GM12878 (cell line): ENCODE measurements at regions of chr15 and their contacts with region 1.

Region 1: DNA sequence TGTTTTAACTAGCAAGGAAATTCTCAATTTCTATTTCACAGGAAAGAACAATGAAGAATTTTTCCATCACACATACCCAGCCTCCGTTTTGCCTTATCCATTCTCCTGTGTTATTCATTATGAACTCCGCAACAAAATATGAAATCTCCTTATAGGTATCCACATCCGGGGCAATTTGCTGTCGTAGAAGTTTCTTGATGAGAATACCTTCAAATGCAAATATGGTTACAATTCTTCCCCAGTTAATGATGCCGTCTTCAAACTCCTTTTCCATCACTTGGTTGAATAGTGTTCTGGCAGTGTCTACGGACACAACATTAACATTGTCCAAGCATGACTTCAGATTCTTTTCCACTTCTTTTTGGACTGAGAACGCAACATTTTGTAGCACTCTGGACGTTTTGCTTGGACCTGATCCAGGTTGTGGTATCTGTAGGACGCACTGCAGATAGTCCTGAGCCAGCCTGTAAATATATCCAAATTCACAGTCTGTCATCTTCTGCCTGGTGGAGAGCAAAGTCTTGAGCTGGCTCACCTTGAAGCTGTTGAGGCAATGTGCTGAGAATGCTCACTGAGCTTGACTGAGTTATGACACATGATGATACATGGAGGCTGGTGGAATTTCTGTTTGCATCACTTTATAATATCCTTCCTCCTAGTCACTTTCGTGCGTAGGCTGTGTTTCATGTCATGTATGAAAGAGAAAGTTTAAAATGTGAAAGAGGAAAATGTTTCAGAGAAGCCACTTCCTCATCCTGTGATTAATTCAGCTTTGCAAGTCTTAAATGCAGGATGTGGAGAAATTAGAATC is at the start of gene BCL2A1:
- DNase-seq: peak; percentile 96
- ATAC-seq: peak; percentile 72
- H3K4me3 ChIP-seq: peak within 1 kb of the TSS; percentile 88
- H3K27ac ChIP-seq: peak within 1 kb of the TSS; percentile 88
- H3K4me1 ChIP-seq: peaks cover 26% of the 10 kb centered on the region
- H3K27me3 ChIP-seq: no peaks in the 10 kb centered on the region
- CTCF ChIP-seq: no peak
- EP300 ChIP-seq: peak; percentile 93 to 94
- POLR2A ChIP-seq: peak; percentile 95
- RAD21 ChIP-seq: no peak; the same call in 1 of the 2 replicates
- polyA plus RNA-seq, gene BCL2A1: 536 to 570 TPM

Region 2: DNA sequence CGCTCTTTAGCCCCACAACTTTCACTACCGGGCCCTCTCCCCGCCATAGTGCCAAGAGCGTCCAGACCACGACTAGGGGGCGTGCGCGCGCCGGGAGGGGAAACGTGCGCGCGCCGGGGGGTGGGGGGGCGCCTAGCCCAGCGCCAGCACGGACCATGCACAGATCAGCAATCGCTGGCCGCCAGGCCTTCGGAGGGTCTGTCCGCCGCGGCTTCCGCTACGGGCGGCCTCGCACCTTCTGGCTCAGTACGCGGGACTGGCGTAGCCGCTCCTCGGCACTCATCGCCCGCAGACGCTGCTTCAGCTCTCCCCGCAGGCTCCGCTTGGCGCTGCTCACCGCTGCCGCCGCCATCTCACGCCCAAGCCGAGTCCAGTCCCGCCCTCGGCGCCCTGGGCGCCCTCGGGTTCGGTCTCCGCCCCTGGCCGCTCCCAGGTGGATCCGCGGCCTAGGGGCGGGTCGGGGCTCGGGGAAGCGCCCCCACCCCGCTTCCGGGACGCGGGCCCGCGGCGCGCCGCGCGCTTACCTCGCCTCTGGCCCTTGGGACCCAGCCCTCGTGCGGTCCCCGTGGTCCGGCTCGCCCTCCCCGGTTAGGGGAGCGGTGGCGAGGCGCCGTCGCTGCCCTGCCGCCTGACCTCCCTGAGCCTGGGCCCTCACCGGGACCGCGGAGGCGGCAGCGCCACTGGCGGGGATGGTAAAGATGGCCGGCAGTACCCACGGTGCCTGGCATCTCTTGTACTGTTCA is 74.0 kb before region 1 on chr15 and contains the start of gene MTHFS:
- CTCF ChIA-PET with region 1: interaction called, 10 read pairs
- POLR2A ChIA-PET with region 1: interaction called, 14 read pairs
- RAD21 ChIA-PET with region 1: interaction called, 35 read pairs
- SMC1A ChIA-PET with region 1: interaction called, 58 read pairs
- in situ Hi-C with region 1: no loop called
- intact Hi-C with region 1: loop called (anchors 2 kb)
- DNase-seq: no peak
- ATAC-seq: peak; percentile 86
- H3K4me3 ChIP-seq: peak within 1 kb of the TSS; percentile 66
- H3K27ac ChIP-seq: peak within 1 kb of the TSS; percentile 85
- H3K4me1 ChIP-seq: peaks cover 16% of the 10 kb centered on the region
- H3K27me3 ChIP-seq: no peaks in the 10 kb centered on the region
- CTCF ChIP-seq: peak; percentile 44 to 62 (median 54)
- EP300 ChIP-seq: 0 out of 4 replicates have a peak, but pooled peaks of 1 of the 2 experiments have one; percentile 26
- POLR2A ChIP-seq: peak; percentile 94
- RAD21 ChIP-seq: peak; percentile 57
- polyA plus RNA-seq, gene MTHFS: 14.0 to 24.5 TPM

Region 3: GRCh38 chr15:79901958-79902357 is 68.9 kb before region 1 on chr15:
- CTCF ChIA-PET with region 1: interaction called, 10 read pairs
- POLR2A ChIA-PET with region 1: interaction called, 14 read pairs
- RAD21 ChIA-PET with region 1: interaction called, 35 read pairs
- SMC1A ChIA-PET with region 1: interaction called, 58 read pairs
- in situ Hi-C with region 1: no loop called
- intact Hi-C with region 1: loop called (anchors 2 kb)
- DNase-seq: peak; percentile 90
- ATAC-seq: peak; percentile 42
- H3K4me3 ChIP-seq: no peak overlapping the region
- H3K27ac ChIP-seq: peak overlapping the region; percentile 36
- H3K4me1 ChIP-seq: peaks cover 33% of the 10 kb centered on the region
- H3K27me3 ChIP-seq: no peaks in the 10 kb centered on the region
- CTCF ChIP-seq: peak in 1 of 3 experiments; percentile 9; a peak in 1 of 6 replicates
- EP300 ChIP-seq: no peak
- POLR2A ChIP-seq: no peak
- RAD21 ChIP-seq: no peak

Region 4: DNA sequence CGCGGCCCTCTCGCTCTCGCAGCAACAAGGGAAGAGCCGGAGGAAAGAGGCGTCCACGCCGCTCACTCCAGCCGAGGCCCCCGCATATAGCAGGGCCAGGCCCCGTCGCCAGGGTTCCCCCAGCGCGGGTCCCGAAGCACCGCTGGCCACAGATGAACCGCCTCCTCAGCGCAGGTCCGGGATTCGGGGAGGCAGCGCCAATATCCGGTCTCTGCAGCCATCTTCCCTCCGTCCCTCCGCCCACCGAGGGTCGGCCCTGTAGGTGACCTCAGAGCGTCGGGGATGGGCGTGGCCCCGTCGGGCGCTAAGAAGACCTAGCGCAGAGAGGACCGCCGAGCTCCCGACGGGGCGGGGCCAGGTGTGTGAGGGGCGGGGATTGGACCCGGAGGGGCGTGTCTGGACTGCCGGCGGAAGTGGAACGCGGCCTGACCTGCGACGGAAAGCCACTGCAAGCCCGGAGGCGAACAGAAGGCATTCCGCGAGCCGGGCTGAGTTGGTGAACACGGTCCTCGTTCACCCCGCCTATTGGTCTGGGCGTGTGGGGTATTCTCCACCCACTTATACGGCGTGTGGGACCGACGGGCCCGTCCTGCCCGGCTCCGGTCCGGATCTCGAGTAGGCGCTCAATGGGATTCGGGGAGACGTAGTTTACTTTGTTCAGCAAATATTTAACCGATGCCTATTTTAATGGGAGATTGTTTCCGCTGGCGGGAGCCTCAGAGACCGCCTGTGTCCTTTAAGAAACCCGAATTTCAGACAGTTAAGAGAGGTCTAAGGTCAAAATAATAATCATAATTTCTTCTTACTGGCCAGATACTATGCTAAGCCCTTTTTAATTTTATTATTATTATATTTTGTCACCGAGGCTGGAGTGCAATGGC is 47.1 kb before region 1 on chr15:
- CTCF ChIA-PET with region 1: no interaction called
- POLR2A ChIA-PET with region 1: interaction called, 49 read pairs
- RAD21 ChIA-PET with region 1: interaction called, 52 read pairs
- SMC1A ChIA-PET with region 1: interaction called, 54 read pairs
- in situ Hi-C with region 1: no loop called
- intact Hi-C with region 1: loop called (anchors 2 kb)
- DNase-seq: peak; percentile 94
- ATAC-seq: peak; percentile 97
- H3K4me3 ChIP-seq: peak overlapping the region; percentile 80
- H3K27ac ChIP-seq: peak overlapping the region; percentile 92
- H3K4me1 ChIP-seq: no peaks in the 10 kb centered on the region
- H3K27me3 ChIP-seq: no peaks in the 10 kb centered on the region
- CTCF ChIP-seq: no peak
- EP300 ChIP-seq: no peak
- POLR2A ChIP-seq: peak; percentile 94
- RAD21 ChIP-seq: 0 out of 2 replicates have a peak, but pooled peaks have one; percentile 2

Region 5: GRCh38 chr15:79943820-79944219 is 27.0 kb before region 1 on chr15:
- CTCF ChIA-PET with region 1: interaction called, 4 read pairs
- POLR2A ChIA-PET with region 1: interaction called, 18 read pairs
- RAD21 ChIA-PET with region 1: interaction called, 15 read pairs
- SMC1A ChIA-PET with region 1: interaction called, 115 read pairs
- in situ Hi-C with region 1: no loop called
- intact Hi-C with region 1: no loop called
- DNase-seq: no peak
- ATAC-seq: peak; percentile 84
- H3K4me3 ChIP-seq: no peak overlapping the region
- H3K27ac ChIP-seq: no peak overlapping the region
- H3K4me1 ChIP-seq: peaks cover 16% of the 10 kb centered on the region
- H3K27me3 ChIP-seq: no peaks in the 10 kb centered on the region
- CTCF ChIP-seq: no peak
- EP300 ChIP-seq: peak; percentile 72 to 89
- POLR2A ChIP-seq: no peak
- RAD21 ChIP-seq: no peak

Region 6: DNA sequence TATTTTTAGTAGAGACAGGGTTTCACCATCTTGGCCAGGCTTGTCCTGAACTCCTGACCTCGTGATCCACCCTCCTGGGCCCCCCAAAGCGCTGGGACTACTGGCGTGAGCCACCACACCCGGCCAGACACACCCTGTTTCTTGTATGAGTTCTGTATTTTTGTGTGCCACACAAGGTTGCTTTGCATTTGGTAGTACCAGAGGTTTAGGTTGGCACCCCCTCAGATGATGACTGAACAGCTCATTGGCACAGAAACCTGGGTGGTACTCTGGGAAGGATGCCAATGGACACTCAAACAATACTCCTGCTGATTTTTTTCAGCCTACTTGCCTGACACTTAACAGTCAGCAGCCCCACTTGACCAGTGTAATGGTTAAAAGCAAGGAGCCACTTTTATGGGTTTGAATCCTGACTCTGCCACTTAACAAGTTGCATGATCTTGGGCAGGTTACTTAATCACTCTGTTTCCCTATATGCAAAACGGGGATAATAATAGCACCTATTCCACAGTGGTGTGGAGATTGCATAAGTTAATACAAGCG is 39.4 kb after region 1 on chr15:
- CTCF ChIA-PET with region 1: interaction called, 6 read pairs
- POLR2A ChIA-PET with region 1: interaction called, 4 read pairs
- RAD21 ChIA-PET with region 1: interaction called, 3 read pairs
- SMC1A ChIA-PET with region 1: interaction called, 10 read pairs
- in situ Hi-C with region 1: no loop called
- intact Hi-C with region 1: loop called (anchors 2 kb)
- DNase-seq: no peak
- ATAC-seq: peak; percentile 61
- H3K4me3 ChIP-seq: peak overlapping the region; percentile 32; the same call in 1 of the 2 replicates
- H3K27ac ChIP-seq: peak overlapping the region; percentile 93
- H3K4me1 ChIP-seq: peaks cover 43% of the 10 kb centered on the region
- H3K27me3 ChIP-seq: no peaks in the 10 kb centered on the region
- CTCF ChIP-seq: no peak
- EP300 ChIP-seq: no peak
- POLR2A ChIP-seq: no peak
- RAD21 ChIP-seq: no peak

Region 7: DNA sequence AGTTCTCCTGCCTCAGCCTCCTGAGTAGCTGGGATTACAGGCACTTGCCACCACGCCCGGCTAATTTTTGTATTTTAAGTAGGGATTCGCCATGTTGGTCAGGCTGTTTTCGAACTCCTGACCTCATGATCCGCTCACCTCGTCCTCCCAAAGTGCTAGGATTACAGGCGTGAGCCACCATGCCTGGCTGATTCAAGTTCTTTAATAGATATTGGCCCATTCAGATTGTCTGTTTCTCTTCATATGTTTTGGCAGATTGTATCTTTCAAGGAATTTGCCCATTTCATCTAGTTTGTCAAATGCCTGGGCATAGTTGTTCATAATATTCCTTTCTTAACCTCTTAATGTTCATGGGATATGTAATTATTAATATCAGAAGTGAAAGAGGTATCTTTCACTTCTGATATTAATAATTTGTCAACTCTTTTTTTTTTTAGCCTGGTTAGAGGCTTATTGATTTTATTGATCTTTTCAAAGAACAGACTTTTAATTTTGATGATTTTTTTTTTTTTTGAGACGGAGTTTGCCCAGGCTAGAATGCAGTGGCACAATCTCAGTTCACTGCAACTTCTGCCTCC is 48.4 kb after region 1 on chr15:
- CTCF ChIA-PET with region 1: interaction called, 3 read pairs
- POLR2A ChIA-PET with region 1: interaction called, 3 read pairs
- RAD21 ChIA-PET with region 1: interaction called, 18 read pairs
- SMC1A ChIA-PET with region 1: interaction called, 6 read pairs
- in situ Hi-C with region 1: no loop called
- intact Hi-C with region 1: loop called (anchors 2 kb)
- DNase-seq: no peak
- ATAC-seq: peak; percentile 4
- H3K4me3 ChIP-seq: peak overlapping the region; percentile 60
- H3K27ac ChIP-seq: peak overlapping the region; percentile 92
- H3K4me1 ChIP-seq: peaks cover 30% of the 10 kb centered on the region
- H3K27me3 ChIP-seq: no peaks in the 10 kb centered on the region
- CTCF ChIP-seq: no peak
- EP300 ChIP-seq: peak; percentile 8 to 43; a peak in 1 of 4 replicates
- POLR2A ChIP-seq: no peak
- RAD21 ChIP-seq: no peak